MCF 10A (cell line): ENCODE measurements at regions of chr10 and their contacts with region 1.

Region 1: DNA sequence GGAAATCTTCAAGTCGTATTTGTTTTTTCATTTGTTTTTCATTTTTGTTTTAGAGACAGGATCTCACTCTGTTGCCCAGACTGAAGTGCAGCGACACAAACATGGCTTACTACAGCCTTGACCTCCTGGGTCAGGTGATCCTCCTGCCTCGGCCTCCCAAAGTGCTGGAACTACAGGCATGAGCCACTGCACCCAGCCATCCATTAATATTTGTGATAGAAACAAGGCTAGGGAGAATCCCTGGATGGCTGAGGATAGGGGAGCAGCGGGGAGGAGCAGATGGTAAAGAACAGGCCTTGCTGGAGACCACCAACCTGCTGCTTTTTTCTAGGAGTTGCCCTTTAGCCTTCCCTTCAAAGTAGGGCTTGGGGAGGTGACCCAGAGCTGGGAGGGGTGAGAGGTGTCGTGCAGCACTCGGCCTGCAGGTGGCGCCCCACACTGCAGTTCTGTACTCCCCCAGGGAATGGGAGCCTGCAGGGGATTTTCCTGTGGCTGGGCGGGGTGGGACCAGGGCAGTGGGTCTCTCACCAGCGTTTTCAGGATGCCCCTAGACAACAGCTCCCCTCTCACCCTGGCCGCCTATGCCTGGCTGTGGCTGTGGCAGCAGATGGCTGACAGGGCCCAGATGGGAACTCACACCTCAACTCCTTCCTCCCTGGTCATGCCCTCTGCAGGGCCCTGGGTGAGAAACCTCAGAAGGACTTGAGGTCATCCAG is 12.6 kb upstream of the CDH23 start:
- DNase-seq: peak; percentile 58
- H3K4me3 Mint-ChIP-seq: no peak overlapping the region
- H3K27ac Mint-ChIP-seq: no peak overlapping the region
- H3K4me1 Mint-ChIP-seq: no peaks in the 10 kb centered on the region
- H3K27me3 Mint-ChIP-seq: peaks cover 15% of the 10 kb centered on the region
- CTCF ChIP-seq: peak; percentile 92

Region 2: GRCh38 chr10:71371750-71372166 is 12.4 kb before region 1 on chr10:
- CTCF ChIA-PET with region 1: interaction called, 17 read pairs
- POLR2A ChIA-PET with region 1: interaction called, 34 read pairs
- intact Hi-C with region 1: no loop called
- DNase-seq: no peak
- H3K4me3 Mint-ChIP-seq: no peak overlapping the region
- H3K27ac Mint-ChIP-seq: no peak overlapping the region
- H3K4me1 Mint-ChIP-seq: peaks cover 4% of the 10 kb centered on the region
- H3K27me3 Mint-ChIP-seq: no peaks in the 10 kb centered on the region
- CTCF ChIP-seq: no peak

Region 3: GRCh38 chr10:71396084-71396720 is 12.1 kb after region 1 on chr10:
- CTCF ChIA-PET with region 1: interaction called, 12 read pairs
- POLR2A ChIA-PET with region 1: no interaction called
- intact Hi-C with region 1: no loop called
- DNase-seq: no peak
- H3K4me3 Mint-ChIP-seq: no peak overlapping the region
- H3K27ac Mint-ChIP-seq: no peak overlapping the region
- H3K4me1 Mint-ChIP-seq: no peaks in the 10 kb centered on the region
- H3K27me3 Mint-ChIP-seq: peaks cover 60% of the 10 kb centered on the region
- CTCF ChIP-seq: no peak

Region 4: DNA sequence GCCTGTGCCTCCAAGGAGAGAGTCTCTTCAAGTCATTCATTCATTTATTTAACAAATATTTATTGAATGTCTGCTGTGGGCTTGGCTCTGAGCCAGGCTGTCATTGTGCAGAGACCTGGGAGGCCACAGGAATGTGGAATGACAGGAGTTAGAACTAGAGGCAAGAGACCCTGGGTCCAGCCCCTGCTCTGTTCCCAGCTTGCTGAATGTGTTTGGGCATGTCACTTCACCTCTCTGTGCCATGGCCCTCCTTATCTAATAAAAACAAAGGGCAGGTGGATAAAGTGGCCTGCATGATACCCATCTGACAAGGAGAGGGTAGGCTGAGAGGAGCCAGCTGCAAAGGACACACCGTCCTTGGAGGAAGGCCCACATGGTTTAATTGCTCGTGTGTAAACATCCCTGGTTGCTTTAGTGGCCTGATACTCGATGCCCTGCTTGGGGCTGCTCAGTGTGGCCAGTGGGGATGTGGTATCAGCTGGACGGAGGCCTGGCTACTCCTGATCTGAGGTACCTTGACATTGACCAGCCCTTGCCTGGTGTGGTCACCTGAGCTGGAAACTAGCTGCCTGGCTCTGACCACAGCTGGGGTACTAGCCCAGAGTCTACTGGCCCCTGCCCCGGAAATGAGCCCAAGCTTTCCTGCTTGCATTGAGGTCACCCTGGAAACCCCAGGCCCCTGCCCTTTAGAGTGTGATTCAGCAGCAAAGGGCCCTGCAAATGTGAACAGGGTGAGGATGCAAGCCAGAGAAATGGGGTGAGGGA is 128.8 kb after region 1 on chr10:
- CTCF ChIA-PET with region 1: no interaction called
- POLR2A ChIA-PET with region 1: no interaction called
- intact Hi-C with region 1: no loop called
- DNase-seq: no peak
- H3K4me3 Mint-ChIP-seq: no peak overlapping the region
- H3K27ac Mint-ChIP-seq: no peak overlapping the region
- H3K4me1 Mint-ChIP-seq: no peaks in the 10 kb centered on the region
- H3K27me3 Mint-ChIP-seq: peaks cover 12% of the 10 kb centered on the region
- CTCF ChIP-seq: no peak

Region 5: DNA sequence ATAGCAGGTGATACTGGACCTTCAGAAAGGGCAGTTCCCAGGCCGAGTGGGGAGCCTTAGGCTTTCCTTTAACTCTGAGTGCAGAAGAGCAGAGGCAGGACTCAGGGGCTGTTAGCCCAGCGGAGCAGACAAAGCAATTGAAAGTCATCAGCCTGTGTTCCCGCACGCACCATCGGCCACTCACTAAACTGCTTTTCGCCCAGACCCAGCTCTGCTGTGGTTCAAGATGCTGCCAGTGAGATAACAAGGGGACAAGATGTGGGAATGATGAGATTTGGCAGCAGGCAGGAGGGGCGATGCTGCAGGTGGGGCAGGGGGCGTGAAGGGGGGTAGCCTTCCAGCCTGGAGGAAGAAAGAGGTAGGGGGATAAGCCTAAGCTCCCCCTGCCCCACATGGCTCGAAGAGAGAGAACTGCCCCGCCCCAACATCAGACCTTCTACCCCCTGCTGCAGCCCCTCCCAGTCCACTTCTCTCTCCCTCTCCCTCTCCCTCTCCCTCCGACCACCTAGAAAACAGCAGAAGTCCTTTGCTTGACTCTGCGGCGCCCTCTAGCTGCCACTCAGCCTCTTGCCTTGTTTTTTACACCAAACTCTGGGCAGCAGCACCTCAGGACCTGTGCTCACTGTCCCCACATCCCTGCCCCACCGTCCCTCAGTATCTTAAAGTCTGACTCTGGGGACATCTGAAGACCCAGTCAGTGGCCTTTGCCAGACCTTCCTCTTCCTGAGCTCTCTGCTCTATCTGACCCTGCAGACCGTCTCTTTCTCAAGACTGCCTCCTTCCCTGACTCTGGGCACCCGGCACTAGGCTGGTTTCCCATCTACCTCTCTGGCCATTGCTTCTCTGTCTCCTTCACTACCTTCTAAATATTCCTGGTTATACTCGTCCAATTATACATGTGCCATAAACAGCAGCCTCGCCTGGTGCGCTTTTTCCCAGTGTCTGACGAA is 225.0 kb after region 1 on chr10:
- CTCF ChIA-PET with region 1: interaction called, 7 read pairs
- POLR2A ChIA-PET with region 1: no interaction called
- intact Hi-C with region 1: loop called (anchors 1 kb)
- DNase-seq: peak; percentile 61
- H3K4me3 Mint-ChIP-seq: no peak overlapping the region
- H3K27ac Mint-ChIP-seq: no peak overlapping the region
- H3K4me1 Mint-ChIP-seq: peaks cover 6% of the 10 kb centered on the region
- H3K27me3 Mint-ChIP-seq: peaks cover 57% of the 10 kb centered on the region
- CTCF ChIP-seq: peak; percentile 78

Region 6: DNA sequence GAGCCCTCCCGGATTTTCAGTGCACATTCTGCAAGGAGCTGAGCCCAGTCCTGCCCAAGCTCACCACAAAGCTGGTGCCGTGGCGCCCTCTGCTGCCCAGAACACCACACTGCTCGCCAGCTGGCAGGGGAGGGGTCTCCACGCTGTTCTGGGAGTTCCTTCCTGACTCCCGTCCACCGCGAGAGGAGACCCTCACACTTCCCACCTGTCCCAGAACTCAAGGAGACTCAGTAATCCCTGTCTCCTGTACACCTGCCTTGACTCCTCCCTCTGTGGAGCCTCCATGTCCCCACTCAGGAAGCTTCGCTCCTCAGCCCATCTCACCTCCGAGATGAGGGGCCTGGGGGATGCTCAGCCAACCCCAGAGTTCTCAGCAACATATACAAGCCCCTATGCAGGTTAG is 324.2 kb after region 1 on chr10:
- CTCF ChIA-PET with region 1: interaction called, 11 read pairs
- POLR2A ChIA-PET with region 1: no interaction called
- intact Hi-C with region 1: loop called (anchors 2 kb)
- DNase-seq: peak; percentile 47
- H3K4me3 Mint-ChIP-seq: no peak overlapping the region
- H3K27ac Mint-ChIP-seq: no peak overlapping the region
- H3K4me1 Mint-ChIP-seq: peaks cover 11% of the 10 kb centered on the region
- H3K27me3 Mint-ChIP-seq: no peaks in the 10 kb centered on the region
- CTCF ChIP-seq: peak; percentile 84

Region 7: DNA sequence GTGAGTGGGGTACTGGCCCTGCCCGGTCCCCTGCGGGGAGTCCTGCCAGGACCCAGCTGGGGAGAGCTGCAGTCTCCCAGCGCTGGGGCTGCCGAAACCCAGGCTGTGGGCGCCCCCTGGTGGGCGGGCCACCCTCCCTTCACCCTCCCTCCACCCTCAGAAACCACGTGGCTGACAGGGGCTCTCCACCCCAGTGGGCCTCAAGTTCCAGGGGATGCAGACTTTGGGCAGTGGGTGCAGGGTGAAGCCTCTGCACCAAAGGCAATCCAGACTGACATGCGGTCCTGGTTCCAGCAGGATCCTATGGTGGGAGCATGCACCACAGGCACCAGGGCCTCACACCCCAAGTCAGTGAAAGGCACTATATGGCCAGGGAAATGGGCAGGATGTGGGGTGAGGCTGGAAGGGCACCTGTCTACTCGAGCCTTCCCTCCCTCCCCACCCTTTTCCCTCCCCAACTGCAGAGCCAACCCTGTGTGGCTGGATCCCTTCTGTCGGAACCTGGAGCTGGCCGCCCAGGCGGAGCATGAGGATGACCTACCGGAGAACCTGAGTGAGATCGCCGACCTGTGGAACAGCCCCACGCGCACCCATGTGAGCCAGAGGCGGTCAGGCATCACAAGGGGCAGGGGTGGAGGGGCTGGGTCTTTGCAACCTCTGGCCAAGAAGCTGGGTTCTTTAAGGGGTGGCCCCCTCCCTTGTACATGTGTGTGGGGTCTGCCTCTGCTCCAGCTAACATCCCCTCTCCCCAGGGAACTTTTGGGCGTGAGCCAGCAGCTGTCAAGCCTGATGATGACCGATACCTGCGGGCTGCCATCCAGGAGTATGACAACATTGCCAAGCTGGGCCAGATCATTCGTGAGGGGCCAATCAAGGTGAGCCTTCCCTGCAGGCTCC is 428.1 kb after region 1 on chr10:
- CTCF ChIA-PET with region 1: interaction called, 30 read pairs
- POLR2A ChIA-PET with region 1: interaction called, 3 read pairs
- intact Hi-C with region 1: loop called (anchors 5 kb)
- DNase-seq: peak; percentile 62
- H3K4me3 Mint-ChIP-seq: no peak overlapping the region
- H3K27ac Mint-ChIP-seq: no peak overlapping the region
- H3K4me1 Mint-ChIP-seq: no peaks in the 10 kb centered on the region
- H3K27me3 Mint-ChIP-seq: no peaks in the 10 kb centered on the region
- CTCF ChIP-seq: peak; percentile 91